ENCODE measurements at regions of chr19 and their contacts with region 1.

Region 1: DNA sequence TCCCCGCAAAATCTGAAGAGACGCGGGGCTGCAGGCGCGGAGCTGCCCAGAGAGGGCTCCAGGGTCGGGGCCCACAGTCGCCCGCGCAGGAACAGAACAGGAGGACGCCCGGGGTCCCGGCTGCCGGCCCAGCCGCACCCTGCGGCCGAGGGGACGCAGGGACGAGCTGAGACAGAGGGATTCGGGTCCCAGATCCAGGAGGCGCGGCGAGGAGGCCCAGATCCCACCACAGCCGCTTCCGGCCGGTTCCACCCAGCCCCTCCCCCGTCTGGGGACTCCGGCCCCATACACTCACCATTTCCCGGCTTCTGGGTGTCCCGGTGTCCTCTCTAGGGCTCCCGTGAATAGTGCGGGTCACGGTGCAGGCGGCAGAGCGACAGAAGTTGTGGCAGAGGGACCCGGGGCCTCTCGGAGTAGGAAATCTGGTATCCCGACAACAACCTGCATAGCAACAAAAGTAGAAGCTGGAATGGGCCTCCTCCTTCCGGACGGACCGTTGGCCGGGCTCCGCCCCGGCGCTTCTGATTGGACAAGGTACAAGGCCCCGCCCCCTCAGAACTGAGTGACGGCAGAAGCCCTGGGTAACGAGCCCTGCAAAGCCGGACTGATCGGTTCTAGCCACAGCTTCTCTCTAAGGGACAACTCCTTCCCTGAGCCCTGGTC is at the start of gene ZNF20:
- DNase-seq: peak; percentile 88 to 91
- ATAC-seq: peak; percentile 97 to 98
- H3K4me3 ChIP-seq: peak within 1 kb of the TSS; percentile 84 to 96 (median 90)
- H3K27ac ChIP-seq: peak within 1 kb of the TSS; percentile 74 to 81 (median 78)
- H3K4me1 ChIP-seq: peaks cover 4 to 16% of the 10 kb centered on the region in 2 donors
- H3K27me3 ChIP-seq: no peaks in the 10 kb centered on the region
- CTCF ChIP-seq: peak in 1 of 5 experiments; percentile 7
- POLR2A ChIP-seq: peak in 1 of 2 donors; percentile 26
- total RNA-seq, gene ZNF20: 0.29 to 0.78 (median 0.41) TPM in 3 of 4 donors, not detected in the other

Region 2: GRCh38 chr19:11887611-11888531 is 252.1 kb before region 1 on chr19 and contains the start of gene ZNF69:
- in situ Hi-C with region 1: loop called in 1 of 4 experiments (anchors 10 kb)
- intact Hi-C with region 1: no loop called
- DNase-seq: peak; percentile 67 to 70
- ATAC-seq: peak; percentile 94 to 95
- H3K4me3 ChIP-seq: peak within 1 kb of the TSS; percentile 58 to 82 (median 76)
- H3K27ac ChIP-seq: peak within 1 kb of the TSS; percentile 75 to 82 (median 80)
- H3K4me1 ChIP-seq: peaks cover 8% of the 10 kb centered on the region in 2 donors
- H3K27me3 ChIP-seq: no peaks in the 10 kb centered on the region
- CTCF ChIP-seq: peak in 4 of 5 experiments; percentile 18 to 54 (median 34)
- POLR2A ChIP-seq: no peak
- total RNA-seq, gene ZNF69: 0.22 to 2.8 (median 1.8) TPM

Region 3: DNA sequence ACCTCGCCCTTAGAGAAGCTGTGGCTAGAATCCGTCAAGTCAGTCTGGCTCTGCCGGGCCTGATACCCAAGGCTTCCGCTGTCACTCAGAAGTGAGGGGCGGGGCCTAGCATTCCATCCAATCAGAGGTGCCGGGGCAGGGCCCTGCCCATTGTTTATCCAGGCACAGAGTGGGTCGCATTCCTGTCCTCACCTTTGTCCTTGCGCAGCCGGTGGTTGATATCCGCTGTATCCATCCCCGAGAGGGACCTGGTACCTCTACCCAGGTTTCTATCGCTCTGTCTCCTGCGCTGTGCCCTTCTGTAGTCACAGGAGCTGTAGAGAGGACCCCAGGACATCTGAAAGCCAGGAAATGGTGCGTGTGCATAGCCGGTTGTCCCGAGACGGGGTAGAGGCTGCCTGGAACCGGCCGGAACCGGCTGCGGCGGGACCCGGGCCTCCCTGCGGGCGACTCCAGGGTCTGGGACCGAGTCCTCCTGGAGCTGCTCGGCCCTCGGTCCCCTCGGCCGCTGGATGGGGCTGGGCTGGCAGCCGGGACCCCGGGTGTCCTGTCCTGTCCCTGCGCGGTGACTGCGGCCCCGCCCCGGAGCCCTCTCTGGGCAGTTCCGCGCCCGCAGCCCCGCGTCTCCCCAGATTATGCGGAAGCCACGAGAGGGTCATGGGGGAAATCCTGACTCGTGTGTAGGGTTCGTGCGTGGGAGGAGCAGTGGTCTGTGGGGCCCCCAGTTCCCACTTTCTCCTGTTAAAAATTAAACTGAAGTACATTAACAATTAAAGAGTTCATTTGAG is 175.0 kb before region 1 on chr19 and contains the start of gene ZNF763:
- in situ Hi-C with region 1: no loop called
- intact Hi-C with region 1: loop called (anchors 1 kb)
- DNase-seq: peak; percentile 81 to 89
- ATAC-seq: peak; percentile 96 to 98
- H3K4me3 ChIP-seq: peak within 1 kb of the TSS; percentile 67 to 88 (median 76)
- H3K27ac ChIP-seq: peak within 1 kb of the TSS; percentile 78 to 88 (median 86)
- H3K4me1 ChIP-seq: peaks cover 11 to 15% of the 10 kb centered on the region in 2 donors
- H3K27me3 ChIP-seq: no peaks in the 10 kb centered on the region
- CTCF ChIP-seq: no peak
- POLR2A ChIP-seq: peak; percentile 28 to 56
- total RNA-seq, gene ZNF763: 0.46 to 0.80 (median 0.54) TPM

Region 4: DNA sequence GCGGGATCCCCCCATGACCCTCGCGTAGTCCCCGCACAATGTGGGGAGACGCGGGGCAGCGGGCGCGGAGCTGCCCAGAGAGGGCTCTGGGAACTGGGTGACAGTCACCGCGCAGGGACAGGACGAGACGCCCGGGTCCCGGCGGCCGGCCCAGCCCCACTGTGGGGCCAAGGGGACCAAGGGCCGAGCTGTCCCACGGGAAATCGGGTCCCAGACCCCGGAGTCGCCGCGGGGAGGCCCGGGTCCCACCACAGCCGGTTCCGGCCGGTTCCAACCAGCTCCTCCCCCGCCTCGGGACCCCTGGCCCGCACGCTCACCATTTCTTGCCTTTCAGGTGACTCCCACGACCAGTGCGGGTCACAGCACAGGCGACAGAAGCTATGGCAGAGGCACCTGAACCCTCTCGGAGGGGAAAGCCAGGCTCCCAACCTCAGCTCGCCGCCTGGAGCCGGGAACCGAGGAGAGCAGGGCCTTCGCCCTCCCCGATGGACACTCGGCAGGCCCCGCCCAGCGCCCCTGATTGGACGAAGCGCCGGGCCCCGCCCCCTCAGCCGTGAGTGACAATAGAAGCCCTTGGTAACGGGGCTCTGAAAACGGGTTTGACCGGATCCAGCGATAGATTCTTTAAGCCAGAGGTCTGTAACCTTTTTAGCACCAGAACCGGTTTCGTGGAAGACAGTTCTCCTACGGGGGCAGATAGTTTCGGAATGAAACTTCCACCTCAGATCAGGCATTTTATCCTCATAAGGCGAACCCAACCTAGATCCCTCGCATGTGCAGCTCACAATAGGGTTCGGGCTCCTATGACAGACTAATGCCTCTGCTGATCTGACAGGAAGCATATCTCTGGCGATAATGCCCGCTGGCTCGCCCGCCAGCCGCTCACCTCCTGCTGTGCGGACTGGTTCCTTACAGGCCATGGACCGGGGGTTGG is 104.5 kb before region 1 on chr19 and contains the start of gene ZNF433:
- in situ Hi-C with region 1: no loop called
- intact Hi-C with region 1: loop called (anchors 1 kb)
- DNase-seq: peak; percentile 84 to 86
- ATAC-seq: peak; percentile 99
- H3K4me3 ChIP-seq: peak within 1 kb of the TSS; percentile 86 to 95 (median 90)
- H3K27ac ChIP-seq: peak within 1 kb of the TSS; percentile 87 to 92 (median 90)
- H3K4me1 ChIP-seq: peaks cover 8 to 10% of the 10 kb centered on the region in 2 donors
- H3K27me3 ChIP-seq: no peaks in the 10 kb centered on the region
- CTCF ChIP-seq: no peak
- POLR2A ChIP-seq: peak; percentile 52 to 58
- total RNA-seq, gene ZNF433: 3.6 to 8.2 (median 5.0) TPM

Region 5: DNA sequence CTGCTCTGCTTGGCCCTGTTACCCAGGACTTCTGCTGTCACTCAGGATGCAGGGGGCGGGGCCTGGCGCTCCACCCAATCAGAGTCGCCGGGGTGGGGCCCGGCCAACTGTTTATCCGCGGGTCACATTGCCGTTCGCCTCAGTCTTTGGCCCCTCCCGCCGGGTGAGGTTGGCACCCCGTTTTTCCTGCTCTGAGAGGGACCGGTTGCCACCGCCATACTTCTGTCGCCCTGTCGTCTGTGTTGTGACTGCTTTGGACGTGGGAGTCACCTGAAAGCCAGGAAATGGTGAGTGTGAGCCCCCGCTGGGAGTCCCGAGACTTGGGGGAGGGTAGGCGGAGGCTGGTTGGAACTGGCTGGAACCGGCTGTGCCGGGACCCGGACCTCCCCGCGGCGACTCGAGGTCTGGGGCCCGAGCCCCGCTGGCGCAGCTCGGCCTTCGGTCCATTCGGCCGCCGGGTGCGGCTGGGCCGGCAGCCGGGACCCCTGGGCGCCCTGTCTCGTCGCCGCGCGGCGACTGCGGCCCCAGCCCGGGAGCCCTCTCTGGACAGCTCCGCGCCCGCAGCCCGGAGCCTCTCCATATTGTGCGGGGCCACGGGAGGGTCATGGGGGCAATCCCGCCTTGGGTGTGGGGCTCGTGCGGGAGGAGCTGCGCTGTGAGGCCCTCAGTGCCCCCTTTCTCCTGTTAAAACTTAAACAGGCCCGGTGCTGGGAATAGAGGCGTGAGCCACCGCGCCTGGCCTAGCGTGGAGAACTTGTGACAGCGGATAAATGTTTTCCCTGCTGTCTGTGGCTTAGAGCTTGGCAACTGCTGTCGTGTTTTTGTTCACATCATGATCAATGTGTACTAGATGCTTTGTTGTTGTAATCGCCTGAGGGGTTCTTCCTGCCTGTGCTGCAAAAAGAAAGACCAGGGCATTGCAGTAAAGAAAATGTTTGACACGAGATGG is 75.2 kb before region 1 on chr19 and contains the start of gene ZNF844:
- in situ Hi-C with region 1: loop called in 1 of 4 experiments (anchors 5 kb)
- intact Hi-C with region 1: loop called (anchors 1 kb)
- DNase-seq: peak; percentile 93 to 97
- ATAC-seq: peak; percentile 96 to 97
- H3K4me3 ChIP-seq: peak within 1 kb of the TSS; percentile 63 to 92 (median 82)
- H3K27ac ChIP-seq: peak within 1 kb of the TSS; percentile 85 to 97 (median 92)
- H3K4me1 ChIP-seq: peaks cover 0 to 4% of the 10 kb centered on the region in 2 donors
- H3K27me3 ChIP-seq: no peaks in the 10 kb centered on the region
- CTCF ChIP-seq: no peak
- POLR2A ChIP-seq: peak; percentile 80 to 95
- total RNA-seq, gene ZNF844: 2.2 to 5.7 (median 4.9) TPM

Region 6: DNA sequence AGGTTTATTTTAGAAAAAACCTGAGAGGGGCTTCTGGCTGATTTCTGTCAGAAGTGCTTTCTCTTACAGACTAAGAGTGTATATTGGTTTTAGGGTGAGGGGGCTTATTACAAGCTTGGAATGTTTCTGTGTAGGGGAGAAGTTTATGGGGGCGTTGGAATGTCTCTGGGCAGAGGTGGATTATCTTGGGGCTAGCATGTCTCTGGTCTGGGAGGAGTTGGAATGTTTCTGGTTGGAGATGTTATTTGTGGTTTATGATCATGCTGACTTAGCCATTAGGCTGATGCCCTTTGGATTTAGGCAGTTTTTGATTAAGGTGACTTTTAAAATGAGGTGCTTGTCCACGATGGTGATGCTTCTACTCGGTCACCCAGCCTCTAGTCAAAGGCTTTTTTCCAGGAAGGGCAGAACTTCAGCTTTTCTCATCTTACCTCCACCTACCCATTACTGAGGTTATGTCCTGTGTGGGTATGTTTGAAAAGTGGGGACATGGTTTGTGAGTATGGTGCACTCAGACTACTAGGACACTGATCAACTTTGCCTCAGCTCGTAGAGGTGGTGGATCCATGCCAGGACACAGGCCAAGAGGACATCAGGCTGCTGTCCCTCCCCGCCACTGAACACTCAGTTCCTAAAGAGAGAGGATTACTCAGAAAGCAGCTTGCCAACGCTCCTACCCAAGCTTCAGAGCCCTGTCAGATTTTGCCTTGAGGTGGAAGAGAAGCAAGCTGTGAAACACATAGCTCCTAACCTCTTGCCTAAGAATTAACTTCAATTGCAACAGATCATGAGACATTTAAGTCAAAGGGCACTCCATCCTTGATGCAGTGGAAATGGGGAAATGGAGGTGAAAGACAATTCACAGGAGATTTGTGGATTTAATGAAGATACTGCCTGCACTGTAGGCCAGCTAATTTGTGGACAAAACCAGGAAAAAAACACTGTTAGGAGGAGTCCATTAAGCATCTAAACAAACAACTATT is 91.0 kb after region 1 on chr19:
- in situ Hi-C with region 1: no loop called
- intact Hi-C with region 1: no loop called
- DNase-seq: no peak
- ATAC-seq: no peak
- H3K4me3 ChIP-seq: no peak overlapping the region
- H3K27ac ChIP-seq: no peak overlapping the region
- H3K4me1 ChIP-seq: no peaks in the 10 kb centered on the region
- H3K27me3 ChIP-seq: no peaks in the 10 kb centered on the region
- CTCF ChIP-seq: no peak
- POLR2A ChIP-seq: no peak

Region 7: GRCh38 chr19:12791238-12792021 is 651.4 kb after region 1 on chr19 and contains the start of gene JUNB:
- in situ Hi-C with region 1: no loop called
- intact Hi-C with region 1: no loop called
- DNase-seq: peak; percentile 96 to 97
- ATAC-seq: peak; percentile 48 to 50
- H3K4me3 ChIP-seq: peak within 1 kb of the TSS; percentile 91 to 98 (median 94)
- H3K27ac ChIP-seq: peak within 1 kb of the TSS; percentile 99 to 100 (median 100)
- H3K4me1 ChIP-seq: peaks cover 38 to 46% of the 10 kb centered on the region in 2 donors
- H3K27me3 ChIP-seq: no peaks in the 10 kb centered on the region
- CTCF ChIP-seq: peak in 3 of 5 experiments; percentile 10 to 17 (median 16)
- POLR2A ChIP-seq: peak; percentile 100
- total RNA-seq, gene JUNB: 59.0 to 200 (median 128) TPM